AG04449 (cell line): ENCODE measurements at regions of chr1 and their contacts with region 1.

Region 1: GRCh38 chr1:157969697-157970485 is 23.6 kb upstream of the KIRREL1 start:
- DNase-seq: no peak
- H3K4me3 ChIP-seq: no peak overlapping the region
- CTCF ChIP-seq: peak; percentile 86

Region 2: DNA sequence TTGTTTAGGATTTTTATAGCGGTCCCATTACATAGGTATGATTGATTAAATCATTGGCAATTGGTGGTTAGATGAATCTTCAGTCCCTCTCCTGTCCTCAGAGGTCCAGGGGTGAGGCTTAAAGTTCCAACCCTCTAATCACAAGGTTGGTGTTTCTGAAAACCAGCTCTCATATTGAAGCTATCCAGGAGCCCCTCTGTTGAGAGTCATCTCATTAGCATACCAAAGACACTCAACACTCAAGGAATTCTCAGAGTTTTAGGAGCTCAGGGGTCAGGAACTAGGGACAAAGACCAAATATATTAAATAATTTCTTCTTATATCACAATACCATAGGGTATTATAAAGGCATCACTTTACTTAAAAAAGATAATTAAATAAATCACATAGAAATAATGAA is 216.3 kb before region 1 on chr1:
- CTCF ChIA-PET with region 1: no interaction called
- POLR2A ChIA-PET with region 1: no interaction called
- DNase-seq: no peak
- H3K4me3 ChIP-seq: no peak overlapping the region
- CTCF ChIP-seq: no peak

Region 3: GRCh38 chr1:157910270-157910669 is 59.6 kb before region 1 on chr1:
- CTCF ChIA-PET with region 1: no interaction called
- POLR2A ChIA-PET with region 1: no interaction called
- DNase-seq: no peak
- H3K4me3 ChIP-seq: no peak overlapping the region
- CTCF ChIP-seq: no peak

Region 4: DNA sequence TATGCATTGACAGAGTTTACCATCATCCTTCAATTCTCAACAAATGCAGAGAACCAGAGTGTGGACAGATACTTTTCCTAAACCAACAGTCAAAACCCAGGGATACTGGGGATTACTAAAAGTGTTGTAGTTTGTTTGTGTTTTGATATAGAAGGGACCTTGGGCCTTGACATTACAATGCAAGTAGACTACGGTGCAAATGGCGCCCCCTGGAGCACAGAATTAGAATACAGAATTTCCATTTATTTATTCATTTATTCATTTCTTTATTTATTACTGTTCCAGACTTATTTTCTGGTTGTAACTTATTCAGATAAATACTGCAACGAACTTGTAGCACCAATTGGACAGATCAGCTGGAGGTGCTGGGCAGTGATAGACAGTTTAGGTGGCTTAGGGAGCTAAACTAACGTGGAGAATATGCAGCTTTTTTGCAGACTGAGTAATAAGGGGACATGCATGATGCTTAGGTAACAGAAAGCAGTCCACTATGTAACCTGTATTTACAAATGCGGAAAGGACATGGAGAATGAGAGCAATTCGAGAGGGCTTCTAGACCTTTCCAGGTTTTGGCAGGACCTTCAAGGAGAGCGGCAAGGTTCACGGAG is 66.2 kb after region 1 on chr1:
- CTCF ChIA-PET with region 1: interaction called, 51 read pairs
- POLR2A ChIA-PET with region 1: interaction called, 3 read pairs
- DNase-seq: no peak
- H3K4me3 ChIP-seq: no peak overlapping the region
- CTCF ChIP-seq: peak; percentile 42

Region 5: DNA sequence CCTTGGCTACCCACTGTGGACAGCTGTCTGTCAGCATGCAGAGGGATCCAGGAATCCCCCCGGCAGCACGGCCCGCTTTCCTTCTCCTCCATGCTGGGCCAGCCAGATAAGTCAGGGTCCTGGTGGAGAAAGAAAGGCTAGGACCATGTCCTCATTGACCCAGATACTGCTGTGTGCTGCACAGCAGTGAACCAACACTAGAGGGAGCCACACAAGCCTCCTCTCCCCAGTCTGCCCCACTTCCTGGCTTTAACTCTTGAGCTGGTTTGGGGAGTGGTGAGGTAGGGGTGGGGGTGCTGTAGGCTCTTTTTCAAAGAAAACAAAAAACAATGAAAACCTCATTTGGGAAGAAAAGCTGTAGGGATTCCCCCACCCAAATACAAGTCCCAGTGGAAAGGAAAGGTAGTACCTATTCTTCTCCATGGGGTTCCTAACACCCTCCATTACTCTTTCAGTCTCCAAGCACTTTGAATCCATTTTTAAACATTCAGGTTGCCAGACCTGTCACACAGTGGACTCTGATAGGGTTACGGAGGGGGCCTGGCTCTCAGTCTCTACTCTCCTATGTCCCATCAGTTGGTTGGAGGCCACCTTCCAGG is 125.9 kb after region 1 on chr1:
- CTCF ChIA-PET with region 1: interaction called, 140 read pairs
- POLR2A ChIA-PET with region 1: no interaction called
- DNase-seq: no peak
- H3K4me3 ChIP-seq: no peak overlapping the region
- CTCF ChIP-seq: peak; percentile 80

Region 6: DNA sequence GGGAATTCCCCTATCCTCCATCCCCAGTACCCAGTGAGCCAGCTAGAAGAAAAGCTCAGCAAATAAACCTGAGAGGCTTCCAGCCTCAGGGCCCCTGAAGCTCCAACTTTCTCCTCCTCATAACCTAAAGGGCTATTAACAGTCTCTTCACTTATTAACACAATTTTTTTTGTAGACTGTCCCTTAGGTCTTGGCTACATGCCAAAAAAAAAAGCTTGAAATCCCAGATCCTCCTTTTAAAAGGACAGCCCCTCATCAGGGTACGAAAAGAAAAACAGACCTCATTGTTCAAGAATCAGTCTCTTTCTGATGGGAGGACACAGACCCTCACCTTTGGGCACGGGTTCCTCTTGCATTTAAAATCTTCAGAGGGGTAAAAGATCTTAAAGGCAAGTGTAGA is 138.0 kb after region 1 on chr1:
- CTCF ChIA-PET with region 1: interaction called, 2,279 read pairs
- POLR2A ChIA-PET with region 1: no interaction called
- DNase-seq: no peak
- H3K4me3 ChIP-seq: no peak overlapping the region
- CTCF ChIP-seq: no peak